Left cardiac atrium (tissue), 4 donors: ENCODE measurements at regions of chr17 and their contacts with region 1.

Region 1: DNA sequence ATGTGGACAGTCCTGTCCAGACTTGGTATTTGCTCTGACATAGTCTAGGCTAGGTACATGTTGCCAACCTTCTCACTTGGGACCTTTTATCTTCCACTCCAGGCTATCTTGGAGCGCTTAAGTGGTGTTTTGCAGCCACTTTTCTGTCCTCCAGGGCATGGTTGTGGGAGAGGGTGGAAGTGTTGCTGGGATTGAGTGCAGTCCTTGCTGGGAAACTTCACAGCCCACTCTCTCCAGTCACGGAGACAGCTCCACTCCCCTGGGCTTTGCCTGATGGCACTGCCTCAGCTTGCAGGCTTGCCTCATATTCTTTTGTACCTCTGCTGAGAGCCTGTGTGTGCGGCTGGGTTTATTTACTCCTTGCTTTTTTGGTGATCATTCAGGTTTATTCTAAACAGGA is 17.4 kb downstream of the RPA1 start:
- DNase-seq: peak; percentile 64
- ATAC-seq: peak; percentile 98

Region 2: GRCh38 chr17:1764284-1764683 is 82.9 kb before region 1 on chr17:
- intact Hi-C with region 1: no loop called
- DNase-seq: peak; percentile 86
- ATAC-seq: peak; percentile 60 to 75

Region 3: DNA sequence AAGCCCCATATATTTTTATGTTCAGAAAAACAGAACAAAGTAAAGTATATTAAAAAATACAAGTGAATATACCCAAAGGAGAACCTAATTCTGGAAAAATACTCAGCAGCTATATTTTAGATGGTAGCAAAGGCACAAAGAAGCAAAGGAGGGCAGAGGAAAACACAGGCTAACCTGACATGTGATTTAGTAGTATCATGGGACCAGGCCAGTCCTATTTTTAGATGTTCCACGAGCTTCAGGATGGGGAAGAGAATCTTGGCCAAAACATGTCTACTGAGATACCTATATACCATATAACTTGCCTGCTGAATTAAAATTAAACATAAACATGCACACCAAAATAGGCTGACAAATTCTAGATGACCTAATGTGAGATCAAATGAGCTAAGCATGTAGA is 50.4 kb before region 1 on chr17:
- intact Hi-C with region 1: loop called in 1 of 2 experiments (anchors 2 kb)
- DNase-seq: no peak
- ATAC-seq: peak; percentile 72 to 84